ENCODE measurements at regions of chr2 and their contacts with region 1.

Region 1: GRCh38 chr2:95076784-95077529 is 44.7 kb downstream of the MRPS5 start:
- DNase-seq: peak; percentile 92
- ATAC-seq: peak; percentile 87
- H3K4me3 Mint-ChIP-seq: peak overlapping the region; percentile 65
- H3K27ac Mint-ChIP-seq: no peak overlapping the region
- H3K4me1 Mint-ChIP-seq: peaks cover 24% of the 10 kb centered on the region
- H3K27me3 Mint-ChIP-seq: peaks cover 6% of the 10 kb centered on the region
- CTCF ChIP-seq: peak; percentile 78

Region 2: GRCh38 chr2:95062242-95063085 is 14.5 kb before region 1 on chr2:
- CTCF ChIA-PET with region 1: interaction called, 25 read pairs
- POLR2A ChIA-PET with region 1: interaction called, 4 read pairs
- DNase-seq: no peak
- ATAC-seq: peak; percentile 74
- H3K4me3 Mint-ChIP-seq: no peak overlapping the region
- H3K27ac Mint-ChIP-seq: no peak overlapping the region
- H3K4me1 Mint-ChIP-seq: peaks cover 22% of the 10 kb centered on the region
- H3K27me3 Mint-ChIP-seq: no peaks in the 10 kb centered on the region; the same call in 1 of the 2 replicates
- CTCF ChIP-seq: no peak

Region 3: DNA sequence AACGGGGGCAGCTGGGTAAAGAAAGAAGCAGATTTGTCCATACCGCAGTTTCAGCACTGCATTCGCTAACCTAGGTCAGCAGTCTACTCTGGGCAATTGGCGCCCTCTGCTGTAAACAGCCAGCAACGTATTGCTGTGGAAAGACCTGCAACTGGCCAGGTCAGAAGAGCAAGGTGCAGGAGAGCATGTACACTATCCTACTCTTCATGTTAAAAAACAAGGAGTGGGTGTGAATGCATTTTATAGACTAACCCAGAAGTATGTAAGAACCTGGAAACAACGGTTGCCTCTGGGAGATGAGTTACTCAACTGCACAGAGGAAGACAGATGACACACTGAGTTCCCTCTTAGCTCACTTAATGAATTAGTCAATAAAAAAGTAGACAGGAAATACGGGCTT is 38.5 kb after region 1 on chr2:
- CTCF ChIA-PET with region 1: interaction called, 66 read pairs
- POLR2A ChIA-PET with region 1: no interaction called
- DNase-seq: peak; percentile 78
- ATAC-seq: peak; percentile 99
- H3K4me3 Mint-ChIP-seq: no peak overlapping the region
- H3K27ac Mint-ChIP-seq: 0 out of 2 replicates have a peak overlapping the region, but pooled peaks have one; percentile 41
- H3K4me1 Mint-ChIP-seq: peaks cover 27% of the 10 kb centered on the region
- H3K27me3 Mint-ChIP-seq: no peaks in the 10 kb centered on the region
- CTCF ChIP-seq: peak; percentile 66

Region 4: DNA sequence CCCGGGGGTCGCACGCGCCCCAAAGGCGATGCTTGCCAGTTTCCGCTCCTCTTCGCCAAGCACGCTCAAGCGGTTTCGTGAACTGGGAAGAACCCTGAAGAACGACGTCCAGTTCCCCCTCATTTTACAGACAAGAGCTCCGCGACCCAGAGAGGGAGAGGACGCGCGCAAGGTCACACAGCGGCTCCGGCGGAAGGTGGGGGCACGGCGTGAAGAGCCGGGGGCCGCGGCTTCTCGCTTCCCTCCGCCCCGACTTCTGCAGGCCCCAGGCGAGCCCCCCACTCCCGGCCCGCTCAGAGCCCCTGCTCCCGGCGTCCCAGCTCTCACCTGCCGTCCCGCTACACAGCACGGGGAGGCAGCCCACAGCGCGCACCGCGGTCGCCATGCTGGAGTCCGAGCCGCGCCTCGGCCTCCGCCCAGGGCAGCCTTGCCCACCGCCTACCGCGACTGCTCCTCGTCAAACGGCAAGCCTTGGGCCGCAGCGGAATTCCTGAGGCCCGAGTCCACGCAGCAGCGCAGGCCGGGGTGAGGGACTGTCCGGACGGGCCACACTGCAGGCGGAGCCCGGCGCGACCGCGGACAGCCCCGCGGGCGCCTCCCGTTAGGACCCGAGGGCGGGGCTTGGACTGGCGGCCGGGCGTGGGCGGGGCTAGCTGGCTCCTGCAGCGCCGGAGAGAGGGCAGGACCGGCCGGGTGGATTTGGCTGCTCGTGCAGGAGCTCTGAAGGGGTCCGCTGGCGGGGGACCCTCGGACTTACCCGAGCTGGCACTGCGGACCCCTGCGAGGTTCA is 44.6 kb after region 1 on chr2 and contains the start of gene MRPS5:
- CTCF ChIA-PET with region 1: interaction called, 66 read pairs
- POLR2A ChIA-PET with region 1: interaction called, 3 read pairs
- DNase-seq: peak; percentile 87
- ATAC-seq: peak; percentile 97
- H3K4me3 Mint-ChIP-seq: peak within 1 kb of the TSS; percentile 95
- H3K27ac Mint-ChIP-seq: peak within 1 kb of the TSS; percentile 93
- H3K4me1 Mint-ChIP-seq: peaks cover 35% of the 10 kb centered on the region
- H3K27me3 Mint-ChIP-seq: peaks cover 6% of the 10 kb centered on the region; the same call in 1 of the 2 replicates
- CTCF ChIP-seq: no peak
- total RNA-seq, gene MRPS5: 60.4 to 70.3 TPM (median 62.2 TPM) in 3 replicates